Activated B cell treated with CpG ODN at 0.5 μM for 24 hours (primary cell): ENCODE measurements at regions of chr12 and their contacts with region 1.

Region 1: DNA sequence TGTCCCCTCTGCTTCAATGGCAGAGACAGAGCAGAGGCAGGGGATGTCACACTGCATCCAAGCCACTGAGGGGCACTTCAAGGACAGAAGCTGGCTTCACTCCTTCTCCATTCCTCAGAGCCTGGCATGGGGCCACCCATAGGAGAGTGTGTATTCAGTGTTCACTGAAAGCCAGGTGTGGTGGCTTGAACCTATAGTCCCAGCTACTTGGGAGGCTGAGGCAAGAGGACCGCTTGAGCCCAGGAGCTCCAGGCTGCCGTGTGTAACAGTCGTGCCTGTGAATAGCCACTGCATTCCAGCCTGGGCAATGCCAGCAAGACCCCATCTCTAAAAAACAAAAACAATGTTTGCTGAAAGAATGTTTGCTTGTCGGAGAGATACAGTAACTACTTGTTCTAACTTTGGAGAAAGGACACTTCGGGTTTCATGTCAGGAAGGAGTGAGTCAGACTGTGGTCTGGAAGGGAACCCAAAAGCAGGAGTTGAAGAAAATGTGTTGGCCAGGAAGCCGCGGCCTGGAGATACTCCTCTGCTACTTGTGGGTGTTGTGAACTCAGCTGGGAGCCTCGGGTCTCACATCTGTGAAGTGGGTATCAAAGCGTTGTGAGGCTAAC is 43.4 kb downstream of the ELK3 start:
- DNase-seq: no peak
- ATAC-seq: no peak
- H3K4me3 Mint-ChIP-seq: no peak overlapping the region
- H3K27ac Mint-ChIP-seq: no peak overlapping the region
- H3K4me1 Mint-ChIP-seq: peaks cover 22% of the 10 kb centered on the region
- H3K27me3 Mint-ChIP-seq: no peaks in the 10 kb centered on the region
- CTCF ChIP-seq: no peak

Region 2: DNA sequence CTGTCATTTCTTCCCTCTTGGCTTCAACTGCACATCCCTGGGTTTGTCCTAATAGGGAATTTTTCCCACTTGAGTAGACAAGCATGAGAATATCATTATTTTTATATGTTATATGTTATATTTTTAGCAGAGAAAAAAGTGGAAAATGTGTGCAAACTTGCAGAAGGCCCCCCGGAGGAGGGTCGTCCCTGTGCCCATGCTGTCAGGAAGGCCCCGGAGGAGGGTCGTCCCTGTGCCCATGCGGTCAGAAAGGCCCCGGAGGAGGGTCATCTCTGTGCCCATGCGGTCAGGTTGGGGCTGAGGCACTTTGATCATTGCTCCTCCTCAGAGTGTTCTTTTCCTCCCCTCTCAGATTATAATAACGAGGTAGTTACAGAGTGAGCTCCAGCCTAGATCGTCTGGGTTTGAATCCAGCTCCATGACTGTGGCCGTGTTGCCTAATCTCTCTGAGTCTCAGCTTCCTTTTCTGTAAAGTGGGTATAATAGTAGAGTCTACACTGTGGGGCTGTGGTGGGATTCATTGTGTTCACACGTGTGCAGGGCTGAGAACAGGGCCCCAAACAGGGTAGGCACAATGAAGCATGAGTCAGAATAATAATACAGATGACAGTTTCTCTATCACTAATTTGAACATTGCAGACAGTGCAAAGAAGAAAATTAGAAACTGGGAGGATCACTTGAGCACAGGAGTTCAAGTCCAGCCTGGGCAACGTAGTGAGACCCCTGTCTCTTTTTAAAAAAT is 10.0 kb before region 1 on chr12:
- CTCF ChIA-PET with region 1: no interaction called
- POLR2A ChIA-PET with region 1: no interaction called
- intact Hi-C with region 1: loop called (anchors 1 kb)
- DNase-seq: no peak
- ATAC-seq: no peak
- H3K4me3 Mint-ChIP-seq: no peak overlapping the region
- H3K27ac Mint-ChIP-seq: no peak overlapping the region
- H3K4me1 Mint-ChIP-seq: peaks cover 20% of the 10 kb centered on the region
- H3K27me3 Mint-ChIP-seq: no peaks in the 10 kb centered on the region
- CTCF ChIP-seq: no peak

Region 3: DNA sequence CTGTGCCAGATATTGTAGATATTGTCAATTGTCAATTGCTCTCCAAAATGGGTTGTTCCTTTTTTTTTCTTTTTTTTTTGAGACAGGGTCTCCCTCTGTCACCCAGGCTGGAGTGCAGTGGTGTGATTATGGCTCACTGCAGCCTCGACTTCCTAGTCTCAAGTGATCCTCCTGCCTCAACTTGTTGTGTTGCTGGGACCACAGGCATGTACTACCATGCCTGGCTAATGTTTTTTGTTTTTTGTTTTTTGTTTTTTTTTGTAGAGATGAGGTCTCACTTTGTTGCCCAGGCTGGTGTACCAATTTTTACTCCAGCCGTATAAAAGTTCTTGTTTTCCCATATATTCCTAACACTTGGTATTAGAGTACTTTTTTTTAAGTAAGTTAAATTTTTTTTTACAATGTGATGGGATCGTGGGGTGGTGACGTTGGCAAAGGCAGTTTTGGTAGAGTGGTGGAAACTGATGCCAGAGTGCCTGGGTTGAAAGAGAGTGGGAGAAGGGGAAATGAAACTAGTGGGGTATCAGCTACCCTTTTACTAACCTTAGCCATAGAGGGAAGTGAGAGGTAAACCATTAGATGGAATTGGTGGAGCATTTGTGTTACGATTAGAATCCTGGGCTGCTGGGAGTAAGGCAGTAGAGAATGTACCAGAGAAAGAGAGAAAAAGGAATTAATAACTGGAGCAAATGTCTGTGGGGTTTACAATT is 218.8 kb after region 1 on chr12:
- CTCF ChIA-PET with region 1: no interaction called
- POLR2A ChIA-PET with region 1: no interaction called
- intact Hi-C with region 1: no loop called
- DNase-seq: no peak
- ATAC-seq: peak; percentile 94
- H3K4me3 Mint-ChIP-seq: peak overlapping the region; percentile 55
- H3K27ac Mint-ChIP-seq: peak overlapping the region; percentile 62
- H3K4me1 Mint-ChIP-seq: peaks cover 28% of the 10 kb centered on the region
- H3K27me3 Mint-ChIP-seq: no peaks in the 10 kb centered on the region
- CTCF ChIP-seq: no peak